SK-N-SH (cell line): ENCODE measurements at regions of chr17 and their contacts with region 1.

Region 1: GRCh38 chr17:43878260-43879175 is 28.8 kb downstream of the MPP2 start:
- DNase-seq: peak; percentile 91
- H3K4me3 ChIP-seq: no peak overlapping the region
- H3K27ac ChIP-seq: no peak overlapping the region
- H3K4me1 ChIP-seq: peaks cover 0 to 2% of the 10 kb centered on the region in 2 experiments; a peak in 1 of 4 replicates
- H3K27me3 ChIP-seq: no peaks in the 10 kb centered on the region
- CTCF ChIP-seq: peak; percentile 89
- EP300 ChIP-seq: no peak
- RAD21 ChIP-seq: peak; percentile 80

Region 2: GRCh38 chr17:43840814-43841213 is 37.7 kb before region 1 on chr17:
- CTCF ChIA-PET with region 1: interaction called, 33 read pairs
- POLR2A ChIA-PET with region 1: no interaction called
- DNase-seq: peak; percentile 82
- H3K4me3 ChIP-seq: no peak overlapping the region
- H3K27ac ChIP-seq: no peak overlapping the region
- H3K4me1 ChIP-seq: peaks cover 0 to 10% of the 10 kb centered on the region in 2 experiments; a peak in 1 of 4 replicates
- H3K27me3 ChIP-seq: no peaks in the 10 kb centered on the region
- CTCF ChIP-seq: peak; percentile 44
- EP300 ChIP-seq: no peak
- RAD21 ChIP-seq: peak; percentile 52

Region 3: DNA sequence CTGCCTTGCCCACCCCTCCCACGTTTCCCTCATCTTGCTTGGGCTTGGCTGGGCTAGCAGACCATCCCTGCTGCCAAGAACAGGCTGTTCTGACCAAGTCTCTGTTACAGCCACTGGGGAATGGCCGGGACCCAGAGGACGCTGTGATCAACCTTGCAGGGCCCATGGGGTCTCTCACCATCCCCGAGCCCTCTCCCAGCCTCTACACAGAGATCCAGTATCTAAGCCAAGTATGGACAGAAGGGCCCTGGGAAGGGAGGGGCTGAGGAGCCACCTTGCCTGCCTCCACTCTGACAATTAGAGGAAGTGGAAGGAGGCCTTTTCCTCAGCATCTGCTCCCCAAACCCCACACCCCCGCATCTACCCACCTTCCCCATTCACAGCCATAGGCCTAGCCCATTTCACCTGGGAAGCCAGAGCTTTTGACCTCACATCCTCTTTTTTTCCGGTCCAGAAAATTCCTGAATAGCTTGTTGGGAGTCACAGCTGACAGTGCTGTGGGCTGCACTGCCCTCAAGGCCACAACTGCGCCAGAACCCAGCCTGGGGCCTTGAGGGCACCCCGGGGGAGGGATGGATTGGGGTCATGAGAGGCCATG is 17.4 kb before region 1 on chr17:
- CTCF ChIA-PET with region 1: interaction called, 106 read pairs
- POLR2A ChIA-PET with region 1: no interaction called
- DNase-seq: no peak
- H3K4me3 ChIP-seq: no peak overlapping the region
- H3K27ac ChIP-seq: no peak overlapping the region
- H3K4me1 ChIP-seq: no peaks in the 10 kb centered on the region; a peak in 1 of 4 replicates
- H3K27me3 ChIP-seq: peaks cover 11% of the 10 kb centered on the region; the same call in 1 of the 2 replicates
- CTCF ChIP-seq: no peak
- EP300 ChIP-seq: no peak
- RAD21 ChIP-seq: no peak

Region 4: DNA sequence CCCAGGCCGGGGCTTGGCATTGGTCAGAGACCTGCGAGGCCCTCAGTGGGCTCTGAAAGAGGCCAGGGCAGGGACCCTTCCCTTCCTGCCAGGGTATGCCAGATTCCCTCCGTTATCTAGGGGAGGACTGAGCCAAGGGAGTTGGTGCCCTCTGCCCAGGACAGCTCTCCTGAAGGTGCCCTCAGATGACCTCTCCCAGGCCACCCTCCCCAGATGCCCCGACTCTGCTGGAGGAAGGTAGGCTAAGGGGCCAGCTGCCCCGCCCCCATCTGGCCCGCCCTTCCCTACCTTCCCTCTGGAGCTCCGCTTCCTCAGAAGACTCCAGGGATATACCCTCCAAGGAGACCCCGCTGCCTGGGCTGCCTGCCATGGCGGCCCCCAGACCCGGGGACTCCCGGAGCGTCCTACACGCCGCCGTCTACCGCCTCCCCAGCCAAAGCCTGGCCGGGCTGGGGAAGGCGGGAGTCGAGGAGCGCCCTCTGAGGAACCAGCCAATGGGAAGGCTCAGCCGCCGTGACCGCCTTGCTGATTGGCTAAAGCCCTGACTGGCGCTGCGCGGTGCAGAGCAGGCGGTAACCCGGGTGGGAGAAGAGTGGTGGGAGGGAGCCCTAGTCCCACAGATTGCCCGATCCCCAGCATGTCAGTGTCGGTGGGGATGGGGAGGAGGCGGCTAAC is 21.8 kb after region 1 on chr17:
- CTCF ChIA-PET with region 1: interaction called, 344 read pairs
- POLR2A ChIA-PET with region 1: no interaction called
- DNase-seq: peak; percentile 98
- H3K4me3 ChIP-seq: peak overlapping the region; percentile 56 to 66
- H3K27ac ChIP-seq: no peak overlapping the region; a peak in 1 of 4 replicates
- H3K4me1 ChIP-seq: peaks cover 7 to 20% of the 10 kb centered on the region in 2 experiments; a peak in 2 of 4 replicates
- H3K27me3 ChIP-seq: no peaks in the 10 kb centered on the region
- CTCF ChIP-seq: no peak
- EP300 ChIP-seq: no peak
- RAD21 ChIP-seq: no peak

Region 5: GRCh38 chr17:43917348-43918018 is 39.0 kb after region 1 on chr17:
- CTCF ChIA-PET with region 1: interaction called, 10 read pairs
- POLR2A ChIA-PET with region 1: no interaction called
- DNase-seq: no peak
- H3K4me3 ChIP-seq: no peak overlapping the region
- H3K27ac ChIP-seq: no peak overlapping the region
- H3K4me1 ChIP-seq: peaks cover 0 to 7% of the 10 kb centered on the region in 2 experiments; a peak in 1 of 4 replicates
- H3K27me3 ChIP-seq: no peaks in the 10 kb centered on the region; the same call in 1 of the 2 replicates
- CTCF ChIP-seq: no peak
- EP300 ChIP-seq: no peak
- RAD21 ChIP-seq: no peak

Region 6: GRCh38 chr17:43983515-43984411 is 105.2 kb after region 1 on chr17:
- CTCF ChIA-PET with region 1: interaction called, 11 read pairs
- POLR2A ChIA-PET with region 1: no interaction called
- DNase-seq: peak; percentile 72
- H3K4me3 ChIP-seq: peak overlapping the region; percentile 41 to 54
- H3K27ac ChIP-seq: no peak overlapping the region
- H3K4me1 ChIP-seq: peaks cover 0 to 14% of the 10 kb centered on the region in 2 experiments; a peak in 1 of 4 replicates
- H3K27me3 ChIP-seq: peaks cover 14% of the 10 kb centered on the region; the same call in 1 of the 2 replicates
- CTCF ChIP-seq: peak; percentile 39; the same call in 1 of the 2 replicates
- EP300 ChIP-seq: no peak
- RAD21 ChIP-seq: no peak; the same call in 1 of the 2 replicates